Common myeloid progenitor, CD34-positive (primary cell): ENCODE measurements at regions of chr1 and their contacts with region 1.

Region 1: GRCh38 chr1:160618763-160619274 is 28.0 kb downstream of the SLAMF1 start:
- DNase-seq: peak in 2 of 3 donors; percentile 40 to 46
- H3K4me3 ChIP-seq: no peak overlapping the region
- H3K27ac ChIP-seq: no peak overlapping the region
- H3K4me1 ChIP-seq: peaks cover 0 to 12% (median 4%) of the 10 kb centered on the region in 4 experiments
- H3K27me3 ChIP-seq: no peaks in the 10 kb centered on the region

Region 2: DNA sequence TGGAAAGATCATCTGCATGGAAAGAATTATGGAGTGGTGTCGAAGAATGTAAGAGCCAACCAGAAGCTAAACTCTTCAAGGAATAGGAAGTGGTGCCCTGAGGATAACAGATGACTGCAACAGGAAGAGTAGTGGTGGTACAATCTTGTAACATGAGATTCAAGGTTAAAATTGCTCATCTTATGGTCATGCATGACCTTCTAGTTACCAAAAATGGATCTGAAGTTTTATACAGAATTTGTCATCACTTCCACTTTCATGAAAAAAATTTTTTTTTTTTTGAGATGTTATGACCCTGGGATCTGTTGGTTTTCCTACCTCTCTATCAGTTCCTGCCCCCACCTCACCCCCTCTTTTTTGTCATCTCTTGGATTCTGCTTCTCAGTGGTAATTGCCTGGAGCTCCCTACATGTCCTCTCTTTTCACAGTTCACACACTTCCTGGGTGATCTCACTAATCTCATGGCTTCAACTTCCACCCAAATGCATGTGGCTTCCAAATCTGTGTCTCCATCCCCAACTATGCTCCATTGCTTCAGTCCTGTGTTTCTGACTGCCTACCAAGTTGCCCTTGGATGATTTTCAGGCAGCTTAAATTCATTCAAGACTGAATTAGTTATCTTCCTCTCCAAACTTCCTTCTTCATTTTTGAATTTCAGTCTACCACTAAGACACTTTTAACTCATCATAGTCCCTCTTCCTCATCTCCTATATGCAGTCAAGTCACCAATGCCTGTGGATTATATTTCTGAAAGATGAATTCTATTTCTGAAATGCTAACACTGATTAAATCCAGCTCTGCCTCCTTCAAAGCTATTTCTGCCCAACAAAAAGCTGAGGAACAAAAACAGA is 144.2 kb before region 1 on chr1:
- CTCF ChIA-PET with region 1: no interaction called
- POLR2A ChIA-PET with region 1: no interaction called
- DNase-seq: peak in 2 of 3 donors; percentile 31 to 40
- H3K4me3 ChIP-seq: no peak overlapping the region
- H3K27ac ChIP-seq: no peak overlapping the region
- H3K4me1 ChIP-seq: peaks cover 4 to 17% (median 6%) of the 10 kb centered on the region in 4 experiments
- H3K27me3 ChIP-seq: no peaks in the 10 kb centered on the region

Region 3: GRCh38 chr1:160629286-160630210 is 10.7 kb after region 1 on chr1:
- CTCF ChIA-PET with region 1: interaction called, 11 read pairs
- POLR2A ChIA-PET with region 1: no interaction called
- DNase-seq: peak in 2 of 3 donors; percentile 44 to 52
- H3K4me3 ChIP-seq: no peak overlapping the region
- H3K27ac ChIP-seq: no peak overlapping the region
- H3K4me1 ChIP-seq: peaks cover 3 to 54% (median 15%) of the 10 kb centered on the region in 4 experiments
- H3K27me3 ChIP-seq: no peaks in the 10 kb centered on the region